ENCODE measurements at regions of chr7 and their contacts with region 1.

Region 1: DNA sequence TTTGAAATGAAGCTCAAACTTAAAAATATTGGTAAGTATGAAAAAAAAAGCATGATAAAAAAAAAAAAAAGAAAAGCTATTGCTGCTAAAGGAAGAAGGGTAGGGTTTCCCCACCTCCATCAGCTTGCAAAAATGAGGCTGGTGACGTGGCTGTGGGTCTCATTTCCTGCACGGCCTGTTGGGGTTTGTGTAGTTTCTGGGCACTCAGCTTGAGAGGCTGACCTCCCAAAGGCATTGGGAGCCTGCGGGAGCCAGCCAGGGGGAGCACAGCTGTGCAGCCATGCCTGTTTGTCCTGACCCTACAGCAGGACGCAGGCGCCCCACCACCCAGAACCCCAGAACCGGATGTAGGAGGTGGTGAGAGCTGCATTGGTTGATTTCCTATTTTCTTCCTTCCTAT is 48.8 kb upstream of the CARD11 start:
- DNase-seq: peak; percentile 77
- ATAC-seq: peak; percentile 84
- H3K4me3 Mint-ChIP-seq: peak overlapping the region; percentile 76
- H3K27ac Mint-ChIP-seq: peak overlapping the region; percentile 96
- H3K4me1 Mint-ChIP-seq: peaks cover 50% of the 10 kb centered on the region
- H3K27me3 Mint-ChIP-seq: peaks cover 3% of the 10 kb centered on the region

Region 2: DNA sequence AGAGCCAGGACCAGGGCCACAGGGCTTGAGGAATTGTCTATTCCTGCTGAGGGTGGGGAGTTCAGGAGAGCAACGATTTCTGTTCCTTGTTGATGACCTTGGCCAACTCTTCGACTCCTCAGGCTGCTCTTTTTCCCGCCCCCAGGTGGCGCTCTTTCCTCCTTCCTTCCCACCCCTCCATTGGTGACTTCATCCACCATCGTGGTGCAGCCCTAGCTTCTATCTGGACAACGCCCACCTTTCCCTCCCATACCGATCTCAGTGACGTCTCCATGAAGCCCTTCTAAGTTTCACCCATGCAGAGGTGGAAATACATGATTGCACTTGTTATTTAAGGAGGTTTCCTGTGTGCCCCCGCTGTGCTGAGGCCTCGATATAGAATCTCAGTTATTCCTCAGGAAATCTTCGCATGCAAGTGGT is 26.7 kb before region 1 on chr7:
- POLR2A ChIA-PET with region 1: interaction called, 43 read pairs
- DNase-seq: peak; percentile 81
- ATAC-seq: peak; percentile 28
- H3K4me3 Mint-ChIP-seq: peak overlapping the region; percentile 70
- H3K27ac Mint-ChIP-seq: peak overlapping the region; percentile 86
- H3K4me1 Mint-ChIP-seq: peaks cover 71% of the 10 kb centered on the region
- H3K27me3 Mint-ChIP-seq: no peaks in the 10 kb centered on the region

Region 3: DNA sequence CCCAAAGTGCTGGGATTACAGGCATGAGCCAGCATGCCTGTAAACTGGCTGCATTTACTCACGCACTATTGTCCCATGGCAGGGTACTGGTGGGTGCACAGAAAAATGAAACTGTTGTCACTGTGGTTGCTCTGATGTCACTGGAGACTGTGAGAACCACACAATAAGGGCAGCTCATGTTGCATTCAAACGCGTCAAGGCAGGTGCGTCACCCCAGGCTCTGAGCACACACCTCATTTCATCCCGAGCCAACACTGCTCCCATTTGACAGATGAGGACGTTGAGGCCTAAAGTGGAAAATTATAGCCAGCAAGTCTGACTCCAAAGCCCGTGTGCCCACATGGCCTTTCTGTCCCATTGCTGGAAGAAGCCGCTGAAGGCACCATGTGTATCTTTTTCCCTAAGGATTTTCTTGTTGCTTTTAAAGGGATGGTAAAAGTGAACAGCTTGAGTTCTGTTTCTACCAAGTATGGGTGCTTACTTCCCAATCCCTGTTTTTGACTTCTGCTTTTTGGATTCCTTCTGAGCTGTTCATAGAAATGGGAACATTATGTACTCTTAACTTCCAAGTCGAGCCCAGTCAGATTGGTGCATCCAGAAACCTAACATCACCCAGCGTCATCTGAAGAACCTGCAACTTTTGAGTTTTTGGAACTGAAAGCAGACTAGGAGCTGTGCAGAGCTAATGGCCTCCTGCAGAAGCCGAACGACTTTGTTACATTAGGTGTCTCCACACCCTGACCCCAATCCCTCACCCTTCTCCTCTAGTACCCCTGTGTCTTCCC is 11.3 kb after region 1 on chr7:
- POLR2A ChIA-PET with region 1: interaction called, 59 read pairs
- DNase-seq: peak; percentile 31
- ATAC-seq: peak; percentile 22
- H3K4me3 Mint-ChIP-seq: peak overlapping the region; percentile 47
- H3K27ac Mint-ChIP-seq: peak overlapping the region; percentile 93
- H3K4me1 Mint-ChIP-seq: peaks cover 63% of the 10 kb centered on the region
- H3K27me3 Mint-ChIP-seq: no peaks in the 10 kb centered on the region

Region 4: DNA sequence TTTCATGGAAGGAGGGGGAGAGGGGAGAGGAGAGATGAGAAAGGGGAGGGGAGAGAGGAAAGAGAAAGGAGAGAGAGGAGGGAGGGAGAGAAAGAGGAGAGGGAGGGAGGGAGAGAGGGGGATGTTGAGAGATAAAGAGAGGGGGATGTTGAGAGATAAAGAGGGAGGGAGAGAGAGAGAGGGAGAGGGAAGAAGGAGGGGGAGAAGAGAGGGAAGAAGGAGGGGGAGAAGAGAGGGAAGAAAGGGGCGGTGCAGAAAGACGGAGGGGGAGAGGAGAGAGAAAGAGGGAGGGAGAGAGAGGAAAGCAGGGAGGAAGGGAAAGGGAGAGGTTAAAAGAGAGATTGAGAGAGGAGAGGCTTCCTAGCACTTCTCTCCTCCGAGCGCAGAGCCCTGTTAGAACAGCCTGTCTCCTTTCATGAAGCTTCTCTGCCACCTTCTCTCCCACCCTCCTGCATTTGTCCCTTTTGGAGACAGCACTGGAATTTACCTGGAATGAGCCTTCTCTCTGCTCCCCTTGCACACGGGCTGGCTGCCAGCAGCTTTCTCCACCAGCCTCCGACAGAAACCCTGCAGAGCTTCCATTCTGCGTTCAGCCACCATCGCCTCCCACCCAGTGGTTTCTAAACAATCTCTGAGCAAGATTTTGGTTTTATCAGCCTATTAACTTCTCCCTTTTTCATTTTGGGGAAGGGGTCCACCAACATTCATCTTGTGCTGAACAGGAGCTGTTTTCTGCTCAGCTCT is 25.2 kb after region 1 on chr7:
- POLR2A ChIA-PET with region 1: interaction called, 14 read pairs
- DNase-seq: no peak
- ATAC-seq: peak; percentile 57
- H3K4me3 Mint-ChIP-seq: peak overlapping the region; percentile 87
- H3K27ac Mint-ChIP-seq: peak overlapping the region; percentile 93
- H3K4me1 Mint-ChIP-seq: peaks cover 53% of the 10 kb centered on the region
- H3K27me3 Mint-ChIP-seq: no peaks in the 10 kb centered on the region